Activated CD4-positive, alpha-beta memory T cell treated with anti-CD3 and anti-CD28 coated beads, Interleukin-2, amount 10 ng/mL, durations not matched to agents 7 days and 5 days (primary cell): ENCODE measurements at regions of chr18 and their contacts with region 1.

Region 1: GRCh38 chr18:46073474-46074331 is 1.6 kb upstream of the PSTPIP2 start:
- DNase-seq: peak; percentile 49
- H3K4me3 Mint-ChIP-seq: no peak overlapping the region
- H3K27ac Mint-ChIP-seq: no peak overlapping the region
- H3K4me1 Mint-ChIP-seq: peaks cover 30% of the 10 kb centered on the region
- H3K27me3 Mint-ChIP-seq: peaks cover 5% of the 10 kb centered on the region

Region 2: DNA sequence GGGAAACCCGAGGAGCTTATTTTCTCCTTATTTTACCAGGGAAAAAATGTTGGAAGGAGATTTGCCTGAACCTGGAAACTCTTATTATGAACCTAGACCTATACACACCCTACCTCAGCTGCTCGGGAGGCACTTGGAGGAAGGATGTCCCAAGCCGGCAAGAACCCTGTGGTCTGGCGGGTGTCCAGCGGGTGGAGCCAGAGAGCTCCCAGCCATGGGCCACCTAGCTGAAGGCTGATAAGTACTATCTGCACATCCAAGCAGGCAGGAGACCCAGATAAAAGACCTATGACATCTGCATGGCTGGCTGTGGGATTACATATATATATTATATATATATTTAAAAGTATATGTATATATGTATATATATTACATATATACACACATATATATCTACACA is 350.8 kb before region 1 on chr18:
- CTCF ChIA-PET with region 1: interaction called, 12 read pairs
- POLR2A ChIA-PET with region 1: no interaction called
- DNase-seq: peak; percentile 76
- H3K4me3 Mint-ChIP-seq: no peak overlapping the region
- H3K27ac Mint-ChIP-seq: no peak overlapping the region
- H3K4me1 Mint-ChIP-seq: peaks cover 1% of the 10 kb centered on the region
- H3K27me3 Mint-ChIP-seq: peaks cover 11% of the 10 kb centered on the region

Region 3: GRCh38 chr18:45920367-45920766 is 153.3 kb before region 1 on chr18:
- CTCF ChIA-PET with region 1: interaction called, 25 read pairs
- POLR2A ChIA-PET with region 1: interaction called, 5 read pairs
- DNase-seq: no peak
- H3K4me3 Mint-ChIP-seq: no peak overlapping the region
- H3K27ac Mint-ChIP-seq: no peak overlapping the region
- H3K4me1 Mint-ChIP-seq: peaks cover 5% of the 10 kb centered on the region
- H3K27me3 Mint-ChIP-seq: no peaks in the 10 kb centered on the region

Region 4: GRCh38 chr18:45974088-45974536 is 99.6 kb before region 1 on chr18:
- CTCF ChIA-PET with region 1: interaction called, 40 read pairs
- POLR2A ChIA-PET with region 1: interaction called, 4 read pairs
- DNase-seq: peak; percentile 75
- H3K4me3 Mint-ChIP-seq: no peak overlapping the region
- H3K27ac Mint-ChIP-seq: peak overlapping the region; percentile 22
- H3K4me1 Mint-ChIP-seq: peaks cover 7% of the 10 kb centered on the region
- H3K27me3 Mint-ChIP-seq: no peaks in the 10 kb centered on the region

Region 5: DNA sequence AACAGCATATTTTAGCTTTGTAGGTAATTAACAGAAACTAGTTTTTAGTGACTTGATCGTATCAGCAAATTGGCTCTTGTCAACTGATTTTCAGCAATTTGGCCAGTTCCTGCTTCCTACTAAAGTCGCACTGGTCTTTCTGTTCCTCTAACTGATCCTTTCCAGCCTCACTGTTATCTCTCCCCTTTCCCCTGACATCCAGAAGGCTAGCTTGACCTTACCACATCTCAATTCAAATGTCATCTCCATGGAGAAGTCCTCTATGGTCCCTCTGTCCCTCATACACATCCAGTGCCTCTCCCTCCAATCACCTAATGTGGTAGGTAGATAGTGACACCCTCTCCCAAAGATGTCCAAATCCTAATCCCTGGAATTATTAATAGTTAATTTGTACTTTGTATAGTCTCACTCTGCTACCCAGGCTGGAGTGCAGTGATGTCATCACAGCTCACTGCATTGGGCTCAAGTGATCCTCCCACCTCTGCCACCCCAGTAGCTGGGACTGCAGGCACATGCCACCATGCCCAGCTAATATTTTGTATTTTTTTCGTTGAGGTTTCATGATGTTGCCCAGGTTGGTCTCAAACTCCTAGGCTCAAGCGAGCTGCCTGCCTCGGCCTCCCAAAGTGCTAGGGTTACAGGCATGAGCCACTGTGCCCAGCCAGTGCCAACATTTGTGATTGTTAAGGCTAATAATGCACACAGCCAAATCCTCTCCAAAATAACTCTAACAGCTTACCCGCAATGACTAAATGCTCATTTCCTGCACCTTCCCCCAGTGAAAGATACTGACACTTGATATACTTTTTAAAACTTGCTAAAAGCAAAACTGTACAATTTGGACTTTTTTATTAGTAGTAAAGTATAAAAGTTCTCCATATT is 18.5 kb before region 1 on chr18:
- CTCF ChIA-PET with region 1: interaction called, 15 read pairs
- POLR2A ChIA-PET with region 1: interaction called, 30 read pairs
- DNase-seq: peak; percentile 29
- H3K4me3 Mint-ChIP-seq: peak overlapping the region; percentile 3
- H3K27ac Mint-ChIP-seq: peak overlapping the region; percentile 65
- H3K4me1 Mint-ChIP-seq: peaks cover 40% of the 10 kb centered on the region
- H3K27me3 Mint-ChIP-seq: no peaks in the 10 kb centered on the region

Region 6: DNA sequence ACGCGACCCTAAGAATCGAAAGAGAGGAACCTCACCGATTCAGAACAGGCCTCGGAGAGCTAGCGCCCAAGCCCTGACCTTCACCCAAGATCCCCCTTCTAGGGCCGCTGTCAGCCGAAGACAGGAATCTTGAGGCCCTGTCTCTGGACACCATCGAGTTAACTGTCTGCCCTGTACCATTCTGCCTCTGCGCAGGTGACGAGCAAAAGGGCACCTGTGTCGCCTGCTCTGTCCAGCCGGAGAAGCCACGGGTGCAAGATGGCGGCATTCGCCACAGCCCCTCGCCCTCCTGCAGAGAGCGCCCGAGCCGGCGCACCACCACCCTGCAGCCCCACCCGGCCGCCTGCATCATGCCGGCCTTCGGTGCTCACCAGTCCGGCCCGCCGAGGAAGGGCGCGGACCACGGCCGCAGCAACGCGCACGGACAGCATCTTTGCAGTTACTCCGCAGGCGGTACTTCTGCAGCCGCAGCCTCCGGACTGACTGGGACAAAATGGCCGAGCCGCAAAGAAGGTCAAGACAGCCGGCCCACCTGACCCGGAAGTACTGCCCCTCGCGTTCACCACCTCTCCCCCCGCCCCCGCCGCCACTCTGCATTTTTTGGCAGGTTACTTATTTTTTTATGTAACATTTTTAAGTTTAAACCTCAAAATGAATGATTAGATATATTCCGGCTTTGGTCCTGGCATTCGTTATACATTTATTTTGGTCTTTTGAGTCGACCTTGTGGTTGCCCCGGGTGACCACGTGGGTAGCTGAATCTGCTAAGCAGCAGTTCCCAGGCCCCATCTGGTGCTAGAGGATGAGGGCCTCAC is 24.3 kb after region 1 on chr18 and contains the start of gene ATP5F1A:
- CTCF ChIA-PET with region 1: interaction called, 11 read pairs
- POLR2A ChIA-PET with region 1: interaction called, 5 read pairs
- DNase-seq: peak; percentile 90
- H3K4me3 Mint-ChIP-seq: peak within 1 kb of the TSS; percentile 98
- H3K27ac Mint-ChIP-seq: peak within 1 kb of the TSS; percentile 97
- H3K4me1 Mint-ChIP-seq: peaks cover 27% of the 10 kb centered on the region
- H3K27me3 Mint-ChIP-seq: no peaks in the 10 kb centered on the region
- total RNA-seq, gene ATP5F1A: 282 to 287 TPM